Mammary epithelial cell (primary cell): ENCODE measurements at regions of chr1 and their contacts with region 1.

Region 1: GRCh38 chr1:28248283-28249012 is 10.9 kb upstream of the SESN2 start:
- DNase-seq: peak; percentile 68
- H3K4me3 ChIP-seq: peak overlapping the region in 2 of 3 experiments; percentile 17 to 29
- H3K27ac ChIP-seq: peak overlapping the region; percentile 56
- H3K4me1 ChIP-seq: peaks cover 40% of the 10 kb centered on the region
- H3K27me3 ChIP-seq: no peaks in the 10 kb centered on the region
- CTCF ChIP-seq: peak; percentile 92 to 95

Region 2: DNA sequence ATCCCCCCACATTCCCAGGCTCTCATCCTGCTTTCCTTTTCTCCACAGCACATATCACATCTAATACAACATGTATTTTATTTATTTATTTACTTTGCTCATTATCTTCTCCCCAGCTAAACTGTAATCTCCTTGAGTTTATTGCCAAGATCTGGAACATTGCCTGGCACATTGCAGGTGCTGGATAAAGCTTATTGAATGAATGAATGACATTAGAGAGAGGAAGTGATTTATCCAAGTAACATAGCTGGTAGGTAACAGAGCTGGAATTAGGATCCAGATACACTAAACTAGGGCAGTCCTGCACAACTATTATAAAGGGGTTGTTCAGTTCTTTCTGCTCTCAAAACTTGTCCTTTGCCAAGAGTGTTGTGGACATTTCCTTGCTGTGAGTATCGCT is 63.4 kb before region 1 on chr1:
- CTCF ChIA-PET with region 1: no interaction called
- dilution Hi-C with region 1: loop called (anchors 5 kb)
- in situ Hi-C with region 1: no loop called
- intact Hi-C with region 1: no loop called
- DNase-seq: no peak
- H3K4me3 ChIP-seq: no peak overlapping the region
- H3K27ac ChIP-seq: no peak overlapping the region
- H3K4me1 ChIP-seq: no peaks in the 10 kb centered on the region
- H3K27me3 ChIP-seq: no peaks in the 10 kb centered on the region
- CTCF ChIP-seq: no peak

Region 3: DNA sequence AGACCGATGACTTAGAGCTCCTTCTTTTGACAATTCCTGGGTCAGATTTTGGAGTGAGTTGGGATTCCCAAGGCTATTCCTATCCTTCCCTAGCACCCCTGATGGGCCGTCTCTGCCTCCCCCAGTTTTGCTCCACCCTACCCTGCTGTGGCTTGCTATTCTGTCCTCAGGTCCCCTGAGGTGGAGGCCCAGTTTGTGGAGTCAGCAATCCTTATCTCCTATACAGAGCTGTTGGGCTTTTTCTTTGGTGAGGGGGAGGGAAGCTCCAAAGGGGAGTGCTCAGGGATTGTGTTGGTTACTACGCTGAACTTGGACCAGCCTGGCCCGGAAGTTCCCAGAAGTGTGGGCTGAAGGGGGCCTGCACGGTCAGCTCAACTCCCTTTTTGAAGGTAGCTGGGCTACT is 18.5 kb after region 1 on chr1:
- CTCF ChIA-PET with region 1: interaction called, 13 read pairs
- dilution Hi-C with region 1: no loop called
- in situ Hi-C with region 1: no loop called
- intact Hi-C with region 1: loop called (anchors 2 kb)
- DNase-seq: no peak
- H3K4me3 ChIP-seq: no peak overlapping the region
- H3K27ac ChIP-seq: no peak overlapping the region
- H3K4me1 ChIP-seq: peaks cover 5% of the 10 kb centered on the region
- H3K27me3 ChIP-seq: no peaks in the 10 kb centered on the region
- CTCF ChIP-seq: no peak

Region 4: DNA sequence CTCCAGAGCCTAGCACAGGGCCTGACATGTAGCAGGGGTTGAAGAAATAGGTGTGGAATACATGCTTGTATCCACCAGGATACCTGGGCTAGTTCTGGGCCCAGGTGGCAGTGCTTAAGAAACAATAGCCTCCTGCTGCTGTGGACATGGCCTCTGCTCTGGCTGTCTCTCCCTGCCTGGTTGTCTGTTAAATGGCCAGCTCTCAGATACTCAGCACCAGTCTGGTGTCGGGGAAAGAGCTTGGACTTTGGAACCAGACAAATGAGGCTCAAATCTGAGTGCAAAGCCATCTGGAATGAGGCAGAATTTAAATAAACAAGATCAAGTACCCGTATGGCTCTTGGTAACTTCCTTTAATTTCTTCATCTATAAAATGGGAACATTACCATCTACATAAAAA is 42.4 kb after region 1 on chr1:
- CTCF ChIA-PET with region 1: interaction called, 6 read pairs
- dilution Hi-C with region 1: no loop called
- in situ Hi-C with region 1: no loop called
- intact Hi-C with region 1: loop called (anchors 2 kb)
- DNase-seq: no peak
- H3K4me3 ChIP-seq: no peak overlapping the region
- H3K27ac ChIP-seq: no peak overlapping the region
- H3K4me1 ChIP-seq: peaks cover 11% of the 10 kb centered on the region
- H3K27me3 ChIP-seq: no peaks in the 10 kb centered on the region
- CTCF ChIP-seq: no peak

Region 5: DNA sequence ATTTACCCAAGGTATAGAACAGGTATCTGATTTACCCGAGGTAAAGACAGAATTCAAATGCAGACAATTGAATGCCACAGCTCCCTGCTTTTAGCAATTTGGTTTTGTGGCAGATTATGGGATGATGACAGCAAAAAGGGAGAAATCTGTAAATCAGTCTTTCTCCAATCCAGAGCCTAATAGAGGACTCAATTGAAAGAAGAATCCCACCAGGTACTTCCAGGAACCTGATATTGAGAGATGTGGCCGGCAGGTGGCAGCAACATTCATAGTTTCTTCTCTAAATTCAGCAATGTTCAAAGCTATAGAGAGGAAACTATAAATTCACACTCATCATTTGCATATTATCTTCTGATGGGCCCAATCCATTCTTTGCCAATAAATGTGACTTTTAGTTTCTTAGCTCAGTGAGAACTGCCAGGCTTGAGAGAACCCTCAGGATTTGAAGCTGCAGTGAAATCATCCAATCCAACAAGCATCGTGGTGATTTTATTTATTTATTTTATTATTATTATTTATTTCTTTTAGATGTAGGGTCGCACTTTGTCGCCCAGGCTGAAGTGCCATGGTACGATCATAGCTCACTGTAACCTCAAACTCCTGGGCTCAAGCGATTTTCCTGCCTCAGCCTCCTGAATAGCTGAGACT is 111.3 kb after region 1 on chr1:
- CTCF ChIA-PET with region 1: no interaction called
- dilution Hi-C with region 1: no loop called
- in situ Hi-C with region 1: no loop called
- intact Hi-C with region 1: loop called (anchors 2 kb)
- DNase-seq: peak; percentile 40
- H3K4me3 ChIP-seq: no peak overlapping the region
- H3K27ac ChIP-seq: no peak overlapping the region
- H3K4me1 ChIP-seq: peaks cover under 1% of the 10 kb centered on the region
- H3K27me3 ChIP-seq: no peaks in the 10 kb centered on the region
- CTCF ChIP-seq: peak; percentile 65 to 78

Region 6: GRCh38 chr1:28505406-28506187 is 257.1 kb after region 1 on chr1 and contains the start of gene RCC1:
- CTCF ChIA-PET with region 1: no interaction called
- dilution Hi-C with region 1: no loop called
- in situ Hi-C with region 1: loop called in 1 of 2 experiments (anchors 10 kb)
- intact Hi-C with region 1: loop called (anchors 5 kb)
- DNase-seq: peak; percentile 98
- H3K4me3 ChIP-seq: peak within 1 kb of the TSS; percentile 79 to 100 (median 99)
- H3K27ac ChIP-seq: peak within 1 kb of the TSS; percentile 96
- H3K4me1 ChIP-seq: peaks cover 21% of the 10 kb centered on the region
- H3K27me3 ChIP-seq: no peaks in the 10 kb centered on the region
- CTCF ChIP-seq: no peak
- total RNA-seq, gene RCC1: 21.2 to 46.0 TPM

Region 7: DNA sequence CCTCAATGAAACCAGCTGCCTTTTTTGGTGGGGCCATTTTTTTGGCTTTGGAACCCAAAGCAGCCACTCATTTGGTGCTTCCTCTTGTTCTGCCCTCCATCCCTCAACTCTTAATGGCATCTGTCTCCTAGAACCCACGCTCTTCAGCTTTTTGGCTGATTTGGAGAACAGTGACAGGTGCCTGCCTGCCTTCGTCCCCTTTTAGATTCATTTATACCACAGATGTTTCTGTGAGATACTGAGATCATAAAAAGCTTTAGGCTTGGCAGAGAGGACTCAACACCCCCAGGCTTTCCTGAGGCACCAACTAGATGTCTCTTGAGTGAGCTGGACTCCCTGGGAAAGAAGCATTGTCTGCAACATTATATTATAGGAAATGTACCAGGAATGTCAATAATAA is 467.9 kb after region 1 on chr1:
- CTCF ChIA-PET with region 1: interaction called, 14 read pairs
- dilution Hi-C with region 1: no loop called
- in situ Hi-C with region 1: no loop called
- intact Hi-C with region 1: no loop called
- DNase-seq: no peak
- H3K4me3 ChIP-seq: no peak overlapping the region
- H3K27ac ChIP-seq: no peak overlapping the region
- H3K4me1 ChIP-seq: no peaks in the 10 kb centered on the region
- H3K27me3 ChIP-seq: no peaks in the 10 kb centered on the region
- CTCF ChIP-seq: no peak